Colonic mucosa (tissue), 4 donors: ENCODE measurements at regions of chr13 and their contacts with region 1.

Region 1: GRCh38 chr13:112219740-112220139 is 152.8 kb downstream of the SOX1 start:
- DNase-seq: no peak
- H3K4me3 ChIP-seq: no peak overlapping the region
- H3K27ac ChIP-seq: no peak overlapping the region
- H3K4me1 ChIP-seq: no peaks in the 10 kb centered on the region
- H3K27me3 ChIP-seq: no peaks in the 10 kb centered on the region
- CTCF ChIP-seq: no peak

Region 2: GRCh38 chr13:112119192-112120030 is 100.3 kb before region 1 on chr13:
- intact Hi-C with region 1: loop called (anchors 5 kb)
- DNase-seq: no peak
- H3K4me3 ChIP-seq: no peak overlapping the region
- H3K27ac ChIP-seq: no peak overlapping the region
- H3K4me1 ChIP-seq: peaks cover under 1% of the 10 kb centered on the region
- H3K27me3 ChIP-seq: no peaks in the 10 kb centered on the region
- CTCF ChIP-seq: no peak